Activated CD8-positive, alpha-beta T cell treated with anti-CD3 and anti-CD28 coated beads for 36 hours (primary cell): ENCODE measurements at regions of chr16 and their contacts with region 1.

Region 1: DNA sequence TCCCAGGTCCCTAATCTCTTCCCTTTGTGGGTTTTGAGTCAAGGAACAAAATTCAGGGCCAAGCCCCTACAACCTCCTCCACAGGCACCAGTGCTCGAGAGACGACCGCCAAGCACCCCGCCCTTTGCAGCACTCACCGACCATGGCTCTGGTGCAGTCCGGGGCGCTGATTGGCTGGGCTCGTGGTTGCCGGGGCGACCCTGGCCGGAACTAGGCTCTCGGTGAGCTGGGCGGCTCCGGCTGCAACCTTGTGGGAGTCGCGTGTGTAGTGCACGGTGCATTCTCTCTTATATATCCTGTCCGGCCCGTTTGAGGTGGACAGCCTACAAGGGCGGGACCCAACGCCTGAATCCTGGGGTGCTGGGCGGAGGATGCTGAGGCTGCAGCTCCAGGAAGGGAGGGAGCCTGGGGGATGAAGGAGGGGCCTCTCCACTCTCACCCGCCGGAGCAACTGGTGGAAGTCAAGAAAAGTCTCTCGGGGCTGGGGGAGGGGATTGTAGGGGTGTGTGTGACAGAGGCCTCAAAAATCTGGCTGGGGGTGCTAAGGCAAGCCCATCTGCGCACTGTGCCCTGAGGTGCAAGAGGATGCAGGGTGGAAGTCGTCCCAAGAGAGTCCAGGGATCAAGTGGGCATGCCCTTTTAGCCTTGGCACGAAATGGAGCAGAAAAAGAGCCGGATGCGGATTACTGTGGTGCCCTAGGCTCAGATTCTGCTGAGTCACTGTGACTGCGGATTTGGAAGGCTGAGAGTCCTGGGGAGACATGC is at the start of gene NQO1:
- DNase-seq: peak; percentile 96
- ATAC-seq: peak; percentile 99
- H3K4me3 Mint-ChIP-seq: peak within 1 kb of the TSS; percentile 98
- H3K27ac Mint-ChIP-seq: peak within 1 kb of the TSS; percentile 97
- H3K4me1 Mint-ChIP-seq: peaks cover 22% of the 10 kb centered on the region
- H3K27me3 Mint-ChIP-seq: no peaks in the 10 kb centered on the region
- CTCF ChIP-seq: no peak
- total RNA-seq, gene NQO1: 7.6 to 8.1 TPM

Region 2: DNA sequence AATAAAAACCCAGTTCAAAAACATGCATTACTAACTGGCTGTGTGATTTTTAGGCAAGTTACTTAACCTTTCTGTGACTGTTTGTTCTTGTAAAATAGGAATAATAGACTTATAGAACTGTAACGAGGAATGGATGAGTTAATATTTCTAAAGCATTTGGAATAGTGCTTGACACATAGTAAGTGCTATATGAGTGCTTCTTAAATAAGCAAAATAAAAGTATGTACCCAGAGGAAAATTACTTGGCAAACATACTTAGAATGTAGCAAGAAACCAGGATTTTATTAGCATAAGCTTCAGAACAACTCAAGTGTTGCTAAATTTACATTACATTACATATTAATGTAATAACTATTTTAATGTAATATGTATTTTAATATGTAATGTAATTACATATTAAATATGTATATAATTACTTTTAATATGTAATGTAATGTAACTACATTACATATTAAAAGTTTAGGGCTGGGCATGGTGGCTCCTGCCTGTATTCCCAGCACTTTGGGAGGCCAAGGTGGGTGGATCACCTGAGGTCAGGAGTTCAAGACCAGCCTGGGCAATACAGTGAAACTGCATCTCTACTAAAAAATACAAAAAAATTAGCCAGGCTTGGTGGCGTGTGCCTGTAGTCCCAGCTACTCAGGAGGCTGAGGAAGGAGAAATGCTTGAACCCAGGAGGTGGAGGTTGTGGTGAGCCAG is 146.5 kb before region 1 on chr16:
- CTCF ChIA-PET with region 1: no interaction called
- POLR2A ChIA-PET with region 1: no interaction called
- intact Hi-C with region 1: no loop called
- DNase-seq: no peak
- ATAC-seq: no peak
- H3K4me3 Mint-ChIP-seq: no peak overlapping the region
- H3K27ac Mint-ChIP-seq: peak overlapping the region; percentile 6
- H3K4me1 Mint-ChIP-seq: peaks cover 42% of the 10 kb centered on the region
- H3K27me3 Mint-ChIP-seq: no peaks in the 10 kb centered on the region
- CTCF ChIP-seq: no peak

Region 3: DNA sequence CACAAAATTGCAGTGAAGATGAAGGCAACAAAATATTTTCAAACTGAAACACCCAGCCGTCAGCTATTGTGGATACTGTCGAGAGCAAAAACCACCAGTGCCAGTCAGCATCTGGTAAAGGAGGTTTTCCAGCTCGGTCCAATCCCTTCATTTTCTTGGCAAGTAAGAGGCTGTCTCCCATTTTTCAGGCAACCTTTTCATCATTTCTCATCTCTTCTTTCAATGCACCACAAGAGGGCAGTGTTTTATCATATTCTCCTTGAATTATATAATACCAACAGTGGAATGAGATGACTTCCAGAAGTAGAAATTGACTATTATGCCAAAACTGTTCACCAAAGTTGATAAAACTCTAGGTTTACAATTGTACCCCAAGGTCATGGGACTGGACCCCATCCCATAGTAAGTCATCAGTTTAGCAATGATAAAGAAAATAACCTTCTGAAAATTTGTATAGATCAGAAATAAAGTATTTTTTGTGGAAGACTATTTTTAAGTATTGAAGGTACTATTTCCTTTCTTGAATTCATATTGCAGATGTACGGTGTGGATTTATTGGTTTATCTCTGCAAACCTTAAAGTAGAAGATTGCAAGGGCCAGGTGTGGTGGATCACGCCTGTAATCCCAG is 16.9 kb before region 1 on chr16:
- CTCF ChIA-PET with region 1: interaction called, 28 read pairs
- POLR2A ChIA-PET with region 1: no interaction called
- intact Hi-C with region 1: no loop called
- DNase-seq: no peak
- ATAC-seq: peak; percentile 53
- H3K4me3 Mint-ChIP-seq: no peak overlapping the region
- H3K27ac Mint-ChIP-seq: peak overlapping the region; percentile 67
- H3K4me1 Mint-ChIP-seq: peaks cover 5% of the 10 kb centered on the region
- H3K27me3 Mint-ChIP-seq: no peaks in the 10 kb centered on the region
- CTCF ChIP-seq: peak; percentile 86

Region 4: GRCh38 chr16:69741919-69742904 is 15.7 kb after region 1 on chr16:
- CTCF ChIA-PET with region 1: interaction called, 3 read pairs
- POLR2A ChIA-PET with region 1: interaction called, 20 read pairs
- intact Hi-C with region 1: no loop called
- DNase-seq: no peak
- ATAC-seq: no peak
- H3K4me3 Mint-ChIP-seq: no peak overlapping the region
- H3K27ac Mint-ChIP-seq: no peak overlapping the region
- H3K4me1 Mint-ChIP-seq: no peaks in the 10 kb centered on the region
- H3K27me3 Mint-ChIP-seq: no peaks in the 10 kb centered on the region
- CTCF ChIP-seq: no peak

Region 5: GRCh38 chr16:69823831-69824563 is 97.5 kb after region 1 on chr16:
- CTCF ChIA-PET with region 1: no interaction called
- POLR2A ChIA-PET with region 1: no interaction called
- intact Hi-C with region 1: no loop called
- DNase-seq: no peak
- ATAC-seq: no peak
- H3K4me3 Mint-ChIP-seq: no peak overlapping the region
- H3K27ac Mint-ChIP-seq: no peak overlapping the region
- H3K4me1 Mint-ChIP-seq: no peaks in the 10 kb centered on the region
- H3K27me3 Mint-ChIP-seq: no peaks in the 10 kb centered on the region
- CTCF ChIP-seq: no peak